B cell (primary cell): ENCODE measurements at regions of chr2 and their contacts with region 1.

Region 1: GRCh38 chr2:207073801-207074678 is 91.7 kb downstream of the KLF7 start:
- DNase-seq: peak; percentile 34
- ATAC-seq: no peak
- H3K4me3 ChIP-seq: peak overlapping the region in 2 of 5 experiments; percentile 2 to 15
- H3K4me3 Mint-ChIP-seq: peak overlapping the region; percentile 53
- H3K27ac ChIP-seq: no peak overlapping the region
- H3K27ac Mint-ChIP-seq: peak overlapping the region; percentile 22
- H3K4me1 ChIP-seq: peaks cover 32 to 34% of the 10 kb centered on the region in 2 donors
- H3K4me1 Mint-ChIP-seq: peaks cover 32% of the 10 kb centered on the region
- H3K27me3 ChIP-seq: no peaks in the 10 kb centered on the region
- H3K27me3 Mint-ChIP-seq: no peaks in the 10 kb centered on the region
- CTCF ChIP-seq: no peak

Region 2: DNA sequence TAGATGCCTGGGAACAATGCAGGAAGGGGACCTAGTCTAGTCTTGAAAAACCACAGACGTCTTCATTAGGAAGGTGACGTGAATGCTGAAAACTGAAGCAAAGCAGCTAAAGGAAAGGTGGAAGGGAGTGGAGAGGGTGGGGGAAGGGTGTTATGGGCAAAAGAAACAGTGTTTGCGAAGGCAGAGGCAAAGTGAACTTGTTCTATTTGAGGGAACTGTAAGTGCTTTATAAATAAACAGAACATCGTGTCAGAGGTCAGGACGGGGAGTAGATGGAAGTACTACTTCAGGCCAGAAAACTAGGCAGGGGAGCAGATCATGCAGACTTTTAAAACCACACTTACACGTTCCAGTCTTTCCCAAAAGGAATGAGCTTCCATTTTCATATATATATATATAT is 250.9 kb before region 1 on chr2:
- CTCF ChIA-PET with region 1: no interaction called
- POLR2A ChIA-PET with region 1: no interaction called
- intact Hi-C with region 1: no loop called
- DNase-seq: no peak
- ATAC-seq: no peak
- H3K4me3 ChIP-seq: no peak overlapping the region
- H3K4me3 Mint-ChIP-seq: no peak overlapping the region
- H3K27ac ChIP-seq: no peak overlapping the region
- H3K27ac Mint-ChIP-seq: no peak overlapping the region
- H3K4me1 ChIP-seq: no peaks in the 10 kb centered on the region
- H3K4me1 Mint-ChIP-seq: no peaks in the 10 kb centered on the region
- H3K27me3 ChIP-seq: no peaks in the 10 kb centered on the region
- H3K27me3 Mint-ChIP-seq: peaks cover 3% of the 10 kb centered on the region
- CTCF ChIP-seq: no peak

Region 3: GRCh38 chr2:207143215-207144172 is 69.5 kb after region 1 on chr2:
- CTCF ChIA-PET with region 1: interaction called, 6 read pairs
- POLR2A ChIA-PET with region 1: no interaction called
- intact Hi-C with region 1: loop called (anchors 2 kb)
- DNase-seq: peak; percentile 86
- ATAC-seq: peak; percentile 77
- H3K4me3 ChIP-seq: peak overlapping the region; percentile 43 to 71 (median 56)
- H3K4me3 Mint-ChIP-seq: peak overlapping the region; percentile 89
- H3K27ac ChIP-seq: peak overlapping the region; percentile 93 to 99
- H3K27ac Mint-ChIP-seq: peak overlapping the region; percentile 94
- H3K4me1 ChIP-seq: peaks cover 57 to 62% of the 10 kb centered on the region in 2 donors
- H3K4me1 Mint-ChIP-seq: peaks cover 68% of the 10 kb centered on the region
- H3K27me3 ChIP-seq: no peaks in the 10 kb centered on the region
- H3K27me3 Mint-ChIP-seq: no peaks in the 10 kb centered on the region
- CTCF ChIP-seq: no peak